Right ventricle myocardium inferior (tissue), 1 donor: ENCODE measurements at regions of chr16 and their contacts with region 1.

Region 1: DNA sequence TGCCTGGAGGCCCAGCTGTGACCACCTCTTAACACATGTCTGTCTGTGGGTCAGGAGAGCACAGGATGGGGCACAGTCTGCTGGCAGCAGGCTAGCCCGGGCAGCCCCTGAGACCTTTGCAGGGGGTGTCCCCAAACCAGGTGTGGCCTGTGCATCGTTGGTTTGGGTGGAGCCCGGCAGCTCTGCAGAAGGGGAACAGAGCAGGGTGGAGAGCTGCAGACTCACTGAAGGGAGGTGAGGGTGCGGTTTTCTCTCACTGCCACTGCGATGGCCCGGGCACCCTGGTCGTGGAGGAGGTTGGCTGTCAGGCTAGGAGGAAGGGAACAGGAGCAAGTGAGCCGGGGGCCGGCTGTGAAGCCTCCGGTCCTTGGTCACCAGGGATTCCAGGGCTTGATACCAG is 28.8 kb downstream of the NLRC3 start:
- DNase-seq: no peak
- ATAC-seq: no peak

Region 2: DNA sequence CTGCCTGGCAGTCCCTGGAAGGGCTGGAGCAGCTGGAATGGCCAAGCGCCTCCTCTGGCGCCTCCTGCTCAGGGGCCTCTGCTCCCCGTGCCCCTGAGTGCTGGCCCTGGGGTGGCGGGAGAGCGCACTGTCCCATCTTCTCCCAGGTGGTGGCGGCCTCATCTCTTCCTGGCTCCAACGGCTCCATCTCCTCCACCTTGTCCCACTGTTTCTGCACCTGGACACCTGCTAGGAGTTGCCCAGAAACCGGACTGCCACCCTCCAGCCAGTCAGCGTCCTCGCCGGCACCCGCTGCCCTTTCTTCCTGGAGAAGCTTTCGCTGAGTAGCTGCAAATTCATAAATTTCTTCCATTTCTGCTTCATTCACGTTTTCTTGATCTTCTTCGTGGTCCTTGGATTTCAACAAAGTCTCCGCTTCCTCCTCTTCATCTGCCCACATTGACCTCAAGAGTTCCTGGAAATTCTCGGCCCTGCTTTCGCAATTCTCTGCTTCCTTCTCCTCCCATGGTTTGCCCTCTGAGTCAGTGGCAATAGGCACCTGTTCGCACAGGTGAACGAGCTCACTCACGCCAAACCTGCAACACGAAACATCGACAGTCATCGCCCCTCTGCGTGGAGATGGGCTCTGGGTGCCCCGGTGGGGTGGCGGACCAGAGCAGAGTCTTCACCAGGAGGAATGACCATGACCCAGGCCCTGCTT is 42.4 kb after region 1 on chr16:
- intact Hi-C with region 1: loop called (anchors 5 kb)
- DNase-seq: no peak
- ATAC-seq: no peak